Left cardiac atrium (tissue), 4 donors: ENCODE measurements at regions of chr3 and their contacts with region 1.

Region 1: GRCh38 chr3:149657926-149658733 is at the start of gene WWTR1:
- DNase-seq: peak; percentile 95
- ATAC-seq: peak; percentile 91 to 93
- total RNA-seq, gene WWTR1: 45.4 to 87.1 TPM

Region 2: DNA sequence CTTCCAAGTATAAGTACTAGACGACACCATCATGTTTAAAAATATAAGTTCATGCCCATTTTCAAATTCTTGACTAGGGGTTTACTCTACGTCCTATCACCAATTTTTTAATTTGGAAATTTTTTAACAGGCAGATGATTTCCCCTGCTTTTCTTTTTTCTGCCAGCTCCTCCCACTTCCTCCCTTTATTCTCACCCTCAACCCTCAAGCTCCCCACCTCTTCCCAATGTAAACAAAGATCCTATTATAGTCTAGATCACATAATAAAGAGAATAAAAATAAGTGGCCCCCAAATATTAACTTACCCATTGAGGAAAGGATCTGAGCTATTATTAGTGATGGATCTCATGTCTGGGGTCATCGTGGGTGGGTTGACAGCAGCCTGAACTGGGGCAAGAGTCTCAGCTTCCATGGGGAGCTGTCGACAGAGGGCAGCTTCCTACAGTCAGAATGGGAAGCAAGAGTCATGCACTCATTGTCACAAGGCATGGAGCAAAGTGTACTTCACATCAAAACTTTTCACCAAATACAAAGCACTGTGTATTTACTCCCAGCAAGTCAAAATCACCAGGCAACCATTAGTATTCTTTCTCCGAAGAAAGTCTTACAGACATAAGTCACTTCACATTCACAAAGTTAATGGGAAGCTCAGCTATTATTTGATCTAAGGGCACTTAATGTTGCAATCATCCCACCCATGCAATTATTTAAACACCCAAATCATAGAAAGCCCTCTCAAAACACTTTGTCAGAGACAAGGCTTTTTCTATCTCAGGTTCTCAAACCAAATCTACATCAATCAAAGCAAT is 130.4 kb before region 1 on chr3:
- intact Hi-C with region 1: loop called in 1 of 2 experiments (anchors 10 kb)
- DNase-seq: no peak
- ATAC-seq: peak; percentile 48 to 72

Region 3: DNA sequence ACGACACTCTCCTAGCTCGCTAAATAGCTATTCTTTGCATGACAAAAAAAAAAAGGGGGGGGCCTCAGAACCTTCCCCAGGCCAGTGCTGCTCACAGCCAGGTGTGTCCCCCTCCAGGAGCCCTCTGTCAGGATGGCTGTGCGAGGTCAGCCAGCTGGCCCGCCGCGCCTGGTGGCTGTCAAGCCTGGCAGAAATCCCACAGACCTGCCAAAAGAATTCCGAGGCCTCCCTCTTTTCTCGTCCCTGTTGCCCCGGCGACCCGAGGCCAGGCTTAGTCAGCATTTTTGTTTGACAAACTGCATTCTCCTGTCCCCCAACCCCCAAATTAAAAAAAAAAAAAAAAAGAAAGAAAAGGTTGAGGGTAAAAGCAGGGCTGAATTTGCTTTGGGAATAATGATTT is 121.7 kb before region 1 on chr3:
- intact Hi-C with region 1: loop called in 1 of 2 experiments (anchors 5 kb)
- DNase-seq: peak; percentile 76
- ATAC-seq: peak; percentile 73 to 89

Region 4: DNA sequence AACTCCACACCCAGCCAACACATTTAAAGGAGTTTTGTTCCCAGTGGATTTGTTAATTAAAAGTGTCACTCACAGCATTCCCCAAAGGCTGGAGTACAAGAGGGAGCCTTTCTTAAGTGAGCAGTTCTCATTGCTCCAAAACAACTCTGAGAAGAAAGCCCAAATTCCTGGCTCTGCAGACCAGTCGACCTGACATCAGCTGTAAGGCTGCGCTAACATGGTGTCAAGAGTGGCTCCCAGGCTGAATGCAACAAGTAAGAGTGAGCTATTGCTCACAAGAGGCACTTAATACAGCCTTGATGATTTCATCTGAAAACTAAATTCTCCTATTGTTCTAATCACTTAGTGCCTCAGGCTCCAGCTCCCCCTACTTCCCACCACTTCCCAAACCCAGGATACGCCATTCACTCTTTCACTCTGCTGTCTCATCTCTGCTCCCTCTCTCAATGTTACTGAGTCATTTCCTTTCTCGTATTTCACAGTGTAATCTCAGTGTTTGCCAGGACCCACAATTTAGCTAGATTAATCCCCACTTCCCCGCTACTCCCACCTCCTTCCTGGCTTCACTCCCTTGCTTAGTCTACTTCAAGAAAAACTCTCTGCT is 82.1 kb before region 1 on chr3:
- intact Hi-C with region 1: loop called (anchors 5 to 10 kb)
- DNase-seq: peak; percentile 34
- ATAC-seq: peak; percentile 85 to 92

Region 5: DNA sequence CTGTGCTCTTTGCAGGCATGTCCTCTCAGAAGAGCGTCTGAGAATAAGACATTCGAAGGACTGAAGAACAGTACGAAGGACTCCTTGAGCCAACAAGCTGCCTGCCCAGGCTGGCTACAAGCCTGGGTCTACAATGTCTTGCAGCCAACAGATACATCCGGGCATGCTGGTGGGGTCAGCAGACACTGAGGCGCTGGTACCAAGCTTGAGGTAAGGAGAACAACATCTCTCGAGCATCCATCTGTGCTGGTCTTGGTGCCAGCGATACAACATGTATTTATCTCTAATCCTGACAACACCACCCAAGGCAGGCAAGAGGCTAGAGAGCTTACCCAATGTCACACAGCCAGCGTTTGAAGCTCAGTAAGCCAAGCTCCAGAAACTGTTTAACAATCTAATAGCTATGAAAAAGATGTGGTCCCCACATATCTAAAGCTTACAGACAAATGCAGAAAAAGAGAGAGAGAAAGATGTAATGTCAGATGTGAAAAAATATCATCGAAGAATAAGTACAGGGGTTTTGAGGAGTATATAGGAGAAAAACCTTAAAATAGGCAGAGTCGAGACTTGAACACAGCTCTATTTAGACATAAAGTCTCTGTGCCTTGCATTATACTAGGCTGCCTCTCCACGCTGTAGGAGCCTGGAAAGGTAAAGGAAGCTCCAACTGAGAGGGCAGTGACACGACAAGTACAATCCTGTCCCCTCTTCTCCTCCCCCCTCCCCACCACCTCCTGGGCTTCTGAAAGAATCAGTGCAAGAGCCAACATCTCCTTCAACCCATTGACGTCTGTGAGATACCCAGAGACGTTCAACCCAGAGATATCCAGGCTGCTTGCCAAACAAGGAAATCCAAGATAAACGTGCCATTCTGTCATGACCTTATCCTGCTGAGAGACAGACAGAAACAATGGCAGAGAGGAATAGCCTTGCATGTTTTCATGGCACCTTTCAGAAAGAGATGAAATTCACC is 39.7 kb before region 1 on chr3:
- intact Hi-C with region 1: loop called in 1 of 2 experiments (anchors 5 kb)
- DNase-seq: peak; percentile 78
- ATAC-seq: peak; percentile 82 to 85

Region 6: GRCh38 chr3:149717391-149718056 is 59.4 kb after region 1 on chr3:
- intact Hi-C with region 1: loop called in 1 of 2 experiments (anchors 5 kb)
- DNase-seq: no peak
- ATAC-seq: peak; percentile 44 to 52